Heart right ventricle (tissue), 16 donors: ENCODE measurements at regions of chr1 and their contacts with region 1.

Region 1: GRCh38 chr1:67766141-67766978 is 66.9 kb downstream of the GNG12 start:
- DNase-seq: peak; percentile 21 to 32
- ATAC-seq: peak; percentile 57 to 82 (median 67)
- H3K4me3 ChIP-seq: peak overlapping the region in 6 of 10 donors; percentile 23 to 36 (median 34)
- H3K27ac ChIP-seq: peak overlapping the region in 3 of 10 donors; percentile 14 to 56 (median 29)
- H3K4me1 ChIP-seq: peaks cover 0 to 21% (median 13%) of the 10 kb centered on the region in 9 donors
- H3K27me3 ChIP-seq: no peaks in the 10 kb centered on the region
- CTCF ChIP-seq: peak; percentile 64 to 81 (median 73)

Region 2: GRCh38 chr1:67832737-67833601 is 66.6 kb after region 1 on chr1 and contains the start of gene GNG12:
- intact Hi-C with region 1: loop called in 9 of 10 experiments (anchors 5 to 10 kb)
- DNase-seq: peak; percentile 68 to 75
- ATAC-seq: peak; percentile 69 to 93 (median 86)
- H3K4me3 ChIP-seq: peak within 1 kb of the TSS; percentile 60 to 94 (median 80)
- H3K27ac ChIP-seq: peak within 1 kb of the TSS; percentile 53 to 89 (median 84)
- H3K4me1 ChIP-seq: peaks cover 0 to 33% (median 18%) of the 10 kb centered on the region in 9 donors
- H3K27me3 ChIP-seq: peaks cover 0 to 61% (median 0%) of the 10 kb centered on the region in 7 donors
- CTCF ChIP-seq: no peak
- total RNA-seq, gene GNG12: 32.0 to 49.4 (median 35.8) TPM

Region 3: GRCh38 chr1:67838180-67838910 is 72.0 kb after region 1 on chr1:
- intact Hi-C with region 1: loop called in 9 of 10 experiments (anchors 5 to 10 kb)
- DNase-seq: no peak
- ATAC-seq: no peak
- H3K4me3 ChIP-seq: no peak overlapping the region
- H3K27ac ChIP-seq: no peak overlapping the region
- H3K4me1 ChIP-seq: peaks cover 0 to 28% (median 16%) of the 10 kb centered on the region in 9 donors
- H3K27me3 ChIP-seq: peaks cover 0 to 27% (median 0%) of the 10 kb centered on the region in 7 donors
- CTCF ChIP-seq: no peak

Region 4: DNA sequence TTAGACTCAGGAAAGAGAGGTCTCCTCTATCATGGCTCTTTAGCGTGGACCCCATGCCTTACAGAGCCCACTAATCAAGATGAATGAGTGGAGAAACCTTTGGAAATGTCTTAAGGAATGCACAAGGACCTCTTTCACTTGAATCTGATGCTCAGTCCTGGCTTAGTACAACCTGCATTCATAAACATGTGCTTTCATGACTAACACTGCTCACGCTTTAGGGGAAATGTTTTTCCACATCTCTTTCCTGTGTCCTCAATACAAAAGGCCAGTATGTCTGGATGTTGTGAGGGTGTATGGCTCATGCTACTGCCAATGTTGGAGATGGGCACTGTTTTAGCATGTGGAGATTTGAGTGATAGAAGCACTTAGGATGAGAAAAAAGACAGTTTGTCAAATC is 81.1 kb after region 1 on chr1:
- intact Hi-C with region 1: loop called in 4 of 10 experiments (anchors 5 kb)
- DNase-seq: no peak
- ATAC-seq: no peak
- H3K4me3 ChIP-seq: no peak overlapping the region
- H3K27ac ChIP-seq: no peak overlapping the region
- H3K4me1 ChIP-seq: peaks cover 0 to 12% (median 9%) of the 10 kb centered on the region in 9 donors
- H3K27me3 ChIP-seq: no peaks in the 10 kb centered on the region
- CTCF ChIP-seq: no peak

Region 5: DNA sequence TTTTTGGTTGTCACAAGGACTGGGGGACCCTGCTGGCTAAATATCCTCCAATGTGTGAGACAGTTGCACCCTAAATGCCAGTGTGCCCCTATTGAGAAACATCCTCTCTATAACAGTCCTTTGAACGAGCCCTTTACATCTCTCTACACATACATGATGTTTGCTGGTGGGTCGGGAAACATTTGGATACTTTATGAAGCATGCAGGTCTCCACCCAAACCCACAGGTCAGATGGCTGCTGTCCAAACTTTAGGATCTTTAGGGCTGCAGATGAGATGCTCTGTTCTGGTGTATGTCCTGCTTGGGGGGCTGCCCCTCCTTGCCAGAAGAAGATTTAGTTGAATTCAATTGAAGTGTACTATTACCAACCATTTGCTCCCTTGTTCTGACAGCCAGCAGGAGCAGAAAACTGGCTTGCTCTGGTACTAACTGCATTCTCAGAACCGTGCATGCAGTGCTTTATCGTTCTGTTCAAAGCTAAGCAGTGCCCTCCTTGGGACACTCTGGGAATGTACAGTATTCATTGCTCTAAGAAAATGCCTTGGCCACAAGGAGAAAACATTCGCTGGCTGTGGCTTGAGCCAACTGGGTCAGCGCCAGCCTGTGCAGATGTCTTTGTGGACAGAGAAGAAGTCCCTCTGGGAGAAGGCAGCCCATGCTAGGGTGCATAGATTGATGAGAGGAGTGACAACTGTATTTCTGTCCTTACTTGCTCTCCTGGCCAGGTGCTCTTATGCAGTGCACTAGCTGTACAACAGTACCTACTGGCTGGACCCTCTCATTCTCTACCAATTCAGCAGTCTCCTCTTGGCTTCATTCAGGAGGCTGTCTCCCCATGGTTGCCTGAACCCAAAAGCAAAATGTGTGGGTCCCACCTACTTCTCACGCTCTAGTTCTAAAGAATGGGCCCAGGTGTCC is 345.4 kb after region 1 on chr1:
- intact Hi-C with region 1: loop called in 9 of 10 experiments (anchors 2 to 10 kb)
- DNase-seq: peak; percentile 66 to 72
- ATAC-seq: peak; percentile 83 to 92 (median 90)
- H3K4me3 ChIP-seq: no peak overlapping the region
- H3K27ac ChIP-seq: peak overlapping the region in 1 of 10 donors; percentile 10
- H3K4me1 ChIP-seq: peaks cover 0 to 30% (median 17%) of the 10 kb centered on the region in 9 donors
- H3K27me3 ChIP-seq: no peaks in the 10 kb centered on the region
- CTCF ChIP-seq: peak; percentile 9 to 72 (median 53)